Activated CD4-positive, alpha-beta memory T cell treated with anti-CD3 and anti-CD28 coated beads, Interleukin-2, amount 10 ng/mL, durations not matched to agents 7 days and 5 days (primary cell): ENCODE measurements at regions of chr5 and their contacts with region 1.

Region 1: GRCh38 chr5:35852084-35852734 is 4.5 kb upstream of the IL7R start:
- DNase-seq: peak; percentile 35
- H3K4me3 Mint-ChIP-seq: peak overlapping the region; percentile 79
- H3K27ac Mint-ChIP-seq: peak overlapping the region; percentile 98
- H3K4me1 Mint-ChIP-seq: peaks cover 71% of the 10 kb centered on the region
- H3K27me3 Mint-ChIP-seq: no peaks in the 10 kb centered on the region

Region 2: DNA sequence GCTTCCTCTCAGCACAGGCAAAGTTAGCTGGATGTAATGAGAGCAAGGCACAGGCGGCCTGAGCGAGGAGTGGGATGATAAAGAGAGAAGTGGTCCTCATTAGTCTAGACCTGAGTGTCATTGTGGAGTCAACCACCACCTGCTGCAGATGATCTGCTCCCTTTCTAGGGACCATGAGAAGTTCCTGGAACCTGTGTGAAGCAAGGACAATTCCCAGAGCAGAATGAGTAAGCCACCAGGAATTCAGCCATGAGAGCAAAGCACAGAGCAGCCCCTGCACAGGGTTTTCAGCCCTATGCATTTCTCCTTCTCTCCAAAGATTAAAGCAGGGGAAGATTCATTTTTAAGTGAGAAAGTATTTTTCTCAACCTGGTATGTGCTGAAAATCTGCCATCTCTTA is 381.3 kb before region 1 on chr5:
- CTCF ChIA-PET with region 1: no interaction called
- POLR2A ChIA-PET with region 1: no interaction called
- DNase-seq: no peak
- H3K4me3 Mint-ChIP-seq: no peak overlapping the region
- H3K27ac Mint-ChIP-seq: no peak overlapping the region
- H3K4me1 Mint-ChIP-seq: no peaks in the 10 kb centered on the region
- H3K27me3 Mint-ChIP-seq: no peaks in the 10 kb centered on the region

Region 3: GRCh38 chr5:35617435-35618303 is 234.5 kb before region 1 on chr5 and contains the start of gene SPEF2:
- CTCF ChIA-PET with region 1: interaction called, 13 read pairs
- POLR2A ChIA-PET with region 1: interaction called, 6 read pairs
- DNase-seq: peak; percentile 85
- H3K4me3 Mint-ChIP-seq: peak within 1 kb of the TSS; percentile 75
- H3K27ac Mint-ChIP-seq: peak within 1 kb of the TSS; percentile 87
- H3K4me1 Mint-ChIP-seq: peaks cover 41% of the 10 kb centered on the region
- H3K27me3 Mint-ChIP-seq: no peaks in the 10 kb centered on the region
- total RNA-seq, gene SPEF2: 10.8 to 13.1 TPM

Region 4: GRCh38 chr5:35785601-35786085 is 66.6 kb before region 1 on chr5:
- CTCF ChIA-PET with region 1: interaction called, 87 read pairs
- POLR2A ChIA-PET with region 1: interaction called, 158 read pairs
- DNase-seq: no peak
- H3K4me3 Mint-ChIP-seq: peak overlapping the region; percentile 9
- H3K27ac Mint-ChIP-seq: peak overlapping the region; percentile 80
- H3K4me1 Mint-ChIP-seq: peaks cover 80% of the 10 kb centered on the region
- H3K27me3 Mint-ChIP-seq: no peaks in the 10 kb centered on the region

Region 5: GRCh38 chr5:35803191-35803651 is 49.0 kb before region 1 on chr5:
- CTCF ChIA-PET with region 1: no interaction called
- POLR2A ChIA-PET with region 1: interaction called, 10 read pairs
- DNase-seq: no peak
- H3K4me3 Mint-ChIP-seq: no peak overlapping the region
- H3K27ac Mint-ChIP-seq: peak overlapping the region; percentile 33
- H3K4me1 Mint-ChIP-seq: peaks cover 48% of the 10 kb centered on the region
- H3K27me3 Mint-ChIP-seq: no peaks in the 10 kb centered on the region

Region 6: DNA sequence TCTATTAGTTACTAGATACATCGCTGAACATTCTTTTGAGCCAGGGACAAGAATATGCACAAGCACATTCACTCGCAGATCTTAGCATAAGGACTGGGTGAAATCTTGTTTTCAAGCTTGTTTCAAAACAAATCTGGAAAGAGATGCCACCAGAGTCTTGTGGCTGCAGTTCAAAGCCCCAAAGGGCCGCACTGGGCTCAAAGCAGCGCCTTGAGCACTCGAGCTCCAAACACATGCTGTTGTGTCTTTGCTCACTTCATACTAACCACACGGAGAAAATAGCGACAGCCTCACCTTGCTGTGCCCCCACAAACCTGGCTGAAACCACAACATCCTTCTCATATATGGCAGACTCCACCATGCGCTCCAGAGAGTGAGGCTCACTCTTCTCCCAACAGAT is 29.7 kb before region 1 on chr5:
- CTCF ChIA-PET with region 1: interaction called, 12 read pairs
- POLR2A ChIA-PET with region 1: interaction called, 422 read pairs
- DNase-seq: peak; percentile 60
- H3K4me3 Mint-ChIP-seq: peak overlapping the region; percentile 12
- H3K27ac Mint-ChIP-seq: peak overlapping the region; percentile 79
- H3K4me1 Mint-ChIP-seq: peaks cover 88% of the 10 kb centered on the region
- H3K27me3 Mint-ChIP-seq: no peaks in the 10 kb centered on the region

Region 7: GRCh38 chr5:35863159-35863558 is 10.9 kb after region 1 on chr5:
- CTCF ChIA-PET with region 1: interaction called, 3 read pairs
- POLR2A ChIA-PET with region 1: interaction called, 10 read pairs
- DNase-seq: no peak
- H3K4me3 Mint-ChIP-seq: peak overlapping the region; percentile 69
- H3K27ac Mint-ChIP-seq: peak overlapping the region; percentile 50
- H3K4me1 Mint-ChIP-seq: peaks cover 77% of the 10 kb centered on the region
- H3K27me3 Mint-ChIP-seq: no peaks in the 10 kb centered on the region

Region 8: GRCh38 chr5:35902046-35902676 is 50.0 kb after region 1 on chr5:
- CTCF ChIA-PET with region 1: interaction called, 6 read pairs
- POLR2A ChIA-PET with region 1: interaction called, 12 read pairs
- DNase-seq: peak; percentile 52
- H3K4me3 Mint-ChIP-seq: peak overlapping the region; percentile 9
- H3K27ac Mint-ChIP-seq: peak overlapping the region; percentile 71
- H3K4me1 Mint-ChIP-seq: peaks cover 77% of the 10 kb centered on the region
- H3K27me3 Mint-ChIP-seq: no peaks in the 10 kb centered on the region

Region 9: GRCh38 chr5:35938568-35939227 is 86.5 kb after region 1 on chr5 and contains the start of gene CAPSL:
- CTCF ChIA-PET with region 1: no interaction called
- POLR2A ChIA-PET with region 1: no interaction called
- DNase-seq: no peak
- H3K4me3 Mint-ChIP-seq: no peak within 1 kb of the TSS
- H3K27ac Mint-ChIP-seq: no peak within 1 kb of the TSS
- H3K4me1 Mint-ChIP-seq: no peaks in the 10 kb centered on the region
- H3K27me3 Mint-ChIP-seq: peaks cover 26% of the 10 kb centered on the region
- total RNA-seq, gene CAPSL: not detected